ENCODE measurements at regions of chr12 and their contacts with region 1.

Region 1: DNA sequence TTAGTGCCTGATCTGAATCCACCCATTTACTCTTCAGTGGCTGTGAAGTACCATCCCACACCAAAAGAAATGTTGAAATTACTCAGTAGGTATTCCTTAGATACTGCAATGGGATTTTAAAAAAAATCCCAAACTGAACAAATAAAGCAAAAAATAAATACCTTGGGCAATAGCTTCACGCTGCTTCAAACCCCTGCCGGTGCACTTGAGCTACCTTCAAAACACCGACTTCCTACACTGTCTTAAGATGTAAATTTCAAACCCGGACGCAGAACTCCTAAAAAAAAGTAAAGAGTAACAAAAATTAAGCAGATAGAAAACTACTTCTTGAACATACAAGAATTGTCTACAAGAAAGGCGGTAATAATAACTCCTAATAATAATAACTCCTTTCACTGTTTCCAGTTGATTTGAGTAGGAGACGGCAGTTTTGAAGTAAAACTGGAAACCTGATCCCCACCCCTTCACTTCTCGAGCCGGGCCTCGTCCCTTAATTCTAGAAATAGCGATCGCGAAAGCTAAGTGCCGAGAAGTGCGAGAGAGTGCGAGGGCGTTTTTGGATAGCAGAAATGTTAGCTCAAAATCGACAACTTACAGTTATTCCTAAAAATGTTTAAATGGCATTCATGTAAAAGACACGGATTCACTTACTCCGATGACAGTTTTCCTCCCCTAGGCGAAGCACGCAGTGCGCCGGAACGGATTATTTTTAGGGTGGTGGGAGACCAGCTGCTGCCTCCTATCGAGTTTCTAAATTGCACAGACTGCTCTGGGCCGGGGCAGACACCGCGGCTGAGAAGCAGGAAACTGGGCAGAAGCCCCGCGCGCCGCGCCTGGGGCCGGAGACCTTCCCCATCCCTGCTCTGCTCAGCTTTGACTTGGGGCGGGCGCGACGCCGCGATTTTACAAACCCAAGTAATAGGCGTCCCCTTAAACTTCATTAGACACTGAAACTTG is at the start of gene ABCC9:
- DNase-seq: peak; percentile 93
- H3K4me3 ChIP-seq: peak within 1 kb of the TSS; percentile 58 to 67 (median 62)
- H3K27ac ChIP-seq: peak within 1 kb of the TSS; percentile 86 to 87 (median 86)
- H3K4me1 ChIP-seq: peaks cover 0 to 25% (median 23%) of the 10 kb centered on the region in 4 donors
- H3K27me3 ChIP-seq: peaks cover 0 to 4% (median 0%) of the 10 kb centered on the region in 4 donors
- CTCF ChIP-seq: no peak
- EP300 ChIP-seq: no peak
- POLR2A ChIP-seq: peak; percentile 18
- total RNA-seq, gene ABCC9: 44.1 to 58.6 (median 50.9) TPM

Region 2: GRCh38 chr12:21697904-21698630 is 242.8 kb before region 1 on chr12:
- intact Hi-C with region 1: loop called (anchors 5 kb)
- DNase-seq: no peak
- H3K4me3 ChIP-seq: peak overlapping the region in 3 of 4 donors; percentile 11 to 33 (median 14)
- H3K27ac ChIP-seq: no peak overlapping the region
- H3K4me1 ChIP-seq: peaks cover 3 to 6% (median 5%) of the 10 kb centered on the region in 4 donors
- H3K27me3 ChIP-seq: no peaks in the 10 kb centered on the region
- CTCF ChIP-seq: peak; percentile 67 to 73 (median 67)
- EP300 ChIP-seq: no peak
- POLR2A ChIP-seq: no peak

Region 3: DNA sequence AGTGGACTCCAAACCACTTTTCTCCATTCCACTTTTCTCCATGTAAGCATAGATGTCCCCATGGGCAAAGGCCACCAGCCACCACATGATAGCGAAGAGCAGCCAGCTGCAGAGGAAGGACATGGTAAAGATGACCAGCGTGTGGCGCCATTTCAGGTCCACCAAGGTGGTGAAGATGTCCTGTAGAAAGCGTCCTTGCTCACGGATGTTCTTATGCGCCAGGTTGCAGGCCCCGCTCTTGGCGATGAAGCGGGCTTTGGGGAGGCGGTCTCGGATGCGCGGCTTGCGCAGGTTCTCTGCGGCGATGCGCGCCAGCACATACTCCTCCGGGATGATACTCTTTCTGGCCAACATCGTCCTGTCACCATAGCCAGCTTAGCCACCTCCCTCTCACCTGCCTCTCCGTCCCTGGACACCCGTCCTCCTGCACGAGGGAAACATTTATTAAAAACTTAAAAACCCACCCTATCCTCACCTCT is 167.5 kb before region 1 on chr12:
- intact Hi-C with region 1: loop called (anchors 2 kb)
- DNase-seq: no peak
- H3K4me3 ChIP-seq: peak overlapping the region; percentile 57 to 73 (median 68)
- H3K27ac ChIP-seq: peak overlapping the region; percentile 87 to 92 (median 88)
- H3K4me1 ChIP-seq: peaks cover 13 to 48% (median 38%) of the 10 kb centered on the region in 4 donors
- H3K27me3 ChIP-seq: no peaks in the 10 kb centered on the region
- CTCF ChIP-seq: peak; percentile 43 to 50 (median 50)
- EP300 ChIP-seq: no peak
- POLR2A ChIP-seq: no peak

Region 4: DNA sequence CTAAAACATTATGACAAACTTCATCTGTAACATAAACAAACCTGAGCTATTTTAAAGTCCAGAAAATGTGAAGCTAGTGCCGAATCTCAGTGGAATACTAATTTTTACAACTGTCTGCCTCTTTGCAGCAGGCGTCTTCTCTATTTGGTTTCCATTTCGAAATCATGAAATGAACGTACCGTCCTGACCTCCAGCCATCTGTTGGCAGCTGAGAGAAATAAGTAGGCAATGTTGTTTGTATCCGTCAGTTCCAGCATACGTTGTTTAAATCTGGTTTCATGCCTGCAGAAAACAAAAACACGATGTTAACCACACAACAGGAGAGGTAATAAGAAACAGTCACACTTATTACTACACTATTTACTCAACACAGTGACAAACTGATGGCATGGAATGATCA is 112.0 kb before region 1 on chr12:
- intact Hi-C with region 1: loop called (anchors 5 kb)
- DNase-seq: no peak
- H3K4me3 ChIP-seq: peak overlapping the region in 2 of 4 donors; percentile 14 to 25
- H3K27ac ChIP-seq: peak overlapping the region; percentile 77 to 79 (median 78)
- H3K4me1 ChIP-seq: peaks cover 21 to 70% (median 61%) of the 10 kb centered on the region in 4 donors
- H3K27me3 ChIP-seq: no peaks in the 10 kb centered on the region
- CTCF ChIP-seq: no peak
- EP300 ChIP-seq: peak; percentile 81
- POLR2A ChIP-seq: no peak

Region 5: GRCh38 chr12:21891751-21892217 is 49.0 kb before region 1 on chr12:
- intact Hi-C with region 1: loop called (anchors 10 kb)
- DNase-seq: no peak
- H3K4me3 ChIP-seq: peak overlapping the region in 1 of 4 donors; percentile 9
- H3K27ac ChIP-seq: peak overlapping the region; percentile 71 to 80 (median 76)
- H3K4me1 ChIP-seq: peaks cover 23 to 61% (median 59%) of the 10 kb centered on the region in 4 donors
- H3K27me3 ChIP-seq: no peaks in the 10 kb centered on the region
- CTCF ChIP-seq: no peak
- EP300 ChIP-seq: no peak
- POLR2A ChIP-seq: no peak

Region 6: GRCh38 chr12:22173177-22173576 is 232.3 kb after region 1 on chr12:
- intact Hi-C with region 1: no loop called
- DNase-seq: no peak
- H3K4me3 ChIP-seq: no peak overlapping the region
- H3K27ac ChIP-seq: no peak overlapping the region
- H3K4me1 ChIP-seq: no peaks in the 10 kb centered on the region
- H3K27me3 ChIP-seq: no peaks in the 10 kb centered on the region
- CTCF ChIP-seq: no peak
- EP300 ChIP-seq: no peak
- POLR2A ChIP-seq: no peak

Region 7: GRCh38 chr12:22812531-22812930 is 871.7 kb after region 1 on chr12:
- intact Hi-C with region 1: no loop called
- DNase-seq: no peak
- H3K4me3 ChIP-seq: no peak overlapping the region
- H3K27ac ChIP-seq: no peak overlapping the region
- H3K4me1 ChIP-seq: peaks cover 0 to 30% (median 26%) of the 10 kb centered on the region in 4 donors
- H3K27me3 ChIP-seq: no peaks in the 10 kb centered on the region
- CTCF ChIP-seq: no peak
- EP300 ChIP-seq: no peak
- POLR2A ChIP-seq: no peak